AG04450 (cell line): ENCODE measurements at regions of chr16 and their contacts with region 1.

Region 1: DNA sequence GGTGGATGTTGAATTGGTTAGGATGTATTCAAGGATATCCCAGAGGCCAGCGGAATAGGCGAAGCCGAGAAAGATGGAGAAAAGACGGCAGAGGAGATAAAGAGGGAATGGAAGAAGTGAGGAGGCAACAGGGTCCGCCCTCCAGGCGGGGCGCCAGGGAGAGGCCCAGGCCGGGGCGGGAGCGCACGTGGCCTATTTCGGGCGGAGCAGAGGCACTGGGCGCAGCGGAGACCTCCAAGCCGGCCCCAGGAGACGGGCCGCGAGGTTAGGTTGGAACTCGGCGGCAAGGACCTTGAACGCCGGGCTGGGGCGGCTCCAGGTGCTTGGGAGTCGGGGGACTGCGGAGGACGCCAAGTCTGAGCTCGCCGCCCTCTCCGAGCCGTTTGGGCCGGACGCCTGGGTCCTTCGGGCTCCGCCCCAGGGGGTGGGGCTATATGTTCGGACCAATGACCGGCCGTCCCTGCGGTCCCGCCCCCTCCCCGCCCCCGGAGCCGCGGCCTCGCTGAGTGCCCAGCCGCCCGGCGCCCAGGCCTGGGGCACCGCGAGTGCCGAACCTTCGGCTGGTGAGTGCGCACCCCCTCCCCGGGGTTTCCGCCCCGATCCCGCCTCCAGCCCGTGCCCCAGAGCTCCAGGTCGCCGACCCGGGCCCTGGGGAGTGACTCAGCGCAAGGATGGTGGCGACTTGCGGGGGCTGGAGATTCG is at the start of gene ZNF771:
- DNase-seq: peak; percentile 45
- H3K4me3 ChIP-seq: peak within 1 kb of the TSS; percentile 78
- H3K27ac ChIP-seq: peak within 1 kb of the TSS; percentile 87
- H3K27me3 ChIP-seq: no peaks in the 10 kb centered on the region
- CTCF ChIP-seq: no peak
- polyA plus RNA-seq, gene ZNF771: 9.3 and 10.1 TPM in 2 replicates

Region 2: DNA sequence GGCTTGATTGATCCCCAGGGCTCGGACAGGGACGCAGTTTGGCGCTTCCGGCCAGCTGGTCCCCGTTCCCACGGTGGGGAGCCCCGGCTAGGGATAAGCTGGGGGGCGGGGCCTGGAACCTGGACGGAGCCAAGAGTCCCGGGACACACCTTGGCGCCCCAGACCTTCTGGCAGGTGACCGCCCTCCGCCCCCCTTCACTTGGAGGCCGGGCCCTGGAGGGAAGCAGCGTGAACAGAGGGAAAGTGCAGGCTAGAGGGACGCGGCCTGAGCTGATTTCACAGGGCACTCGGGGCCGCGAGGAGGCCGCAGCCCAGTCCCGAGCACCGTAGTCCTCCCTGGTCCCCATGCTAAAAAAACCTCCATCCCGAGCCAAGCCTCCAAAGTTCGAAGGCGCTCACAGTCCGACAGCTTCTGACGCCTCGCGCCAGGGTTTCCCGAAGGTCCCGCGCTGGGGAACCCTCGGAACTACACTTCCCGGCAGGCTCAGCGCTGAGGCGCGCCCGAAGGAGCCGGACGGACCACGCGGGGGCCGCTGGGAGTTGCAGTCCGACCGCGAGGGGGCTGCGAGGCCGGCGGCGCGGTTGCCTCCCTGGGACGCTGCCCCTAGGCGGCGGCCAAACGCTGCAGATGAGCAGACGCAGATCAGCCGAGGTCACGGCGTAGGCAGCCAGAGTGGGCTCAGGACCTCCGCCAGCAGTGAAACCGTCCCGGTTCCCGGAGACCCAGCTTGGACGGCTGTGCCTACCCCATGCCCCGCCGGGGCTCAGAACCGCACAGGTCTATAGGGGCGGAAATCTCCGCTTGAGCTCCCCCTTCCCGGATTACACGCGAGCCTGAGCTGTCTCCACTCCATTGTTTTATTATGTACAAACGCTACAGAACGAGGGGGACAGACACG is 315.5 kb before region 1 on chr16 and contains the start of gene TBX6:
- CTCF ChIA-PET with region 1: interaction called, 19 read pairs
- POLR2A ChIA-PET with region 1: no interaction called
- DNase-seq: peak; percentile 54
- H3K4me3 ChIP-seq: peak within 1 kb of the TSS; percentile 56
- H3K27ac ChIP-seq: peak within 1 kb of the TSS; percentile 47
- H3K27me3 ChIP-seq: no peaks in the 10 kb centered on the region
- CTCF ChIP-seq: peak; percentile 74
- polyA plus RNA-seq, gene TBX6: not detected in 2 replicates

Region 3: DNA sequence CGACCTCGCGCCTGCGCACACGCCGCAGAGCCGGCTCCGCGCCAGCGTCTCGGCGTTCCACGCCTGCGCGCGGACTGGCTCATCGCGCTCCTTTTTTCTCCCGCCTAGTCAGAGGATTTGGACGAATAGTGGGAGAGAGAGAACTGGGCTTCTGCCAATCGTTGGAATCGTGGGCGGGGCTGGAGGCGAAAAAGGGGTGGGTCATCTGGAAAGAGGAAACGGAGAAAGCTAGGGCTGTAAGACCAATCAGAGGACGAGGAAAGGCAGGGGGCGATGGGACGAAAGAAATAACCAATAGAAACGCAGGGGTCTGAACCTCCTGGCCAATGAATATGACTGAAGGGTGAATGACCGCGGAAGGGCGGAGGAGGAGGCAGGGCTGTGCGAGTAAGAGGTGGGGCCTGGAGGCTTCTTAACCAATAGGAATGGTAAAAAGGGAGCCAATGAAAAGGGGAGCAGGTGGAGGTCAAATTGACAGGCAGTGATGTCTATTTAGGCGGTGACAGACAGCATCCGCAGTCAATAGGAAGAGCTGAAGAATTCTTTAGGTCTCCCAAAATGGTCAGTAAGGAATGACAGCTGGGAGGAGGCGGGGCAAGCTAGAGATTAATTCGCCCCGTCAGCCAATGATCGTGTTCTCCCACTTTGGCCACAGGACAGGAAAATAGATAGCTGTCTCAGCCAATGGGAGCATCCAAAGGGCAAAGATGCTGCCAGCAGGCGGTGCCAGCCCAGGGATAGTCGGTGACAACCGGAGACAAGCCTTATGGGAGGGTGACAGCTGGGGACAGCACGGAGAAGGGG is 36.6 kb before region 1 on chr16 and contains the start of gene TBC1D10B:
- CTCF ChIA-PET with region 1: interaction called, 9 read pairs
- POLR2A ChIA-PET with region 1: interaction called, 16 read pairs
- DNase-seq: peak; percentile 100
- H3K4me3 ChIP-seq: peak within 1 kb of the TSS; percentile 85
- H3K27ac ChIP-seq: peak within 1 kb of the TSS; percentile 52
- H3K27me3 ChIP-seq: no peaks in the 10 kb centered on the region
- CTCF ChIP-seq: peak; percentile 36
- polyA plus RNA-seq, gene TBC1D10B: 12.0 and 14.8 TPM in 2 replicates

Region 4: DNA sequence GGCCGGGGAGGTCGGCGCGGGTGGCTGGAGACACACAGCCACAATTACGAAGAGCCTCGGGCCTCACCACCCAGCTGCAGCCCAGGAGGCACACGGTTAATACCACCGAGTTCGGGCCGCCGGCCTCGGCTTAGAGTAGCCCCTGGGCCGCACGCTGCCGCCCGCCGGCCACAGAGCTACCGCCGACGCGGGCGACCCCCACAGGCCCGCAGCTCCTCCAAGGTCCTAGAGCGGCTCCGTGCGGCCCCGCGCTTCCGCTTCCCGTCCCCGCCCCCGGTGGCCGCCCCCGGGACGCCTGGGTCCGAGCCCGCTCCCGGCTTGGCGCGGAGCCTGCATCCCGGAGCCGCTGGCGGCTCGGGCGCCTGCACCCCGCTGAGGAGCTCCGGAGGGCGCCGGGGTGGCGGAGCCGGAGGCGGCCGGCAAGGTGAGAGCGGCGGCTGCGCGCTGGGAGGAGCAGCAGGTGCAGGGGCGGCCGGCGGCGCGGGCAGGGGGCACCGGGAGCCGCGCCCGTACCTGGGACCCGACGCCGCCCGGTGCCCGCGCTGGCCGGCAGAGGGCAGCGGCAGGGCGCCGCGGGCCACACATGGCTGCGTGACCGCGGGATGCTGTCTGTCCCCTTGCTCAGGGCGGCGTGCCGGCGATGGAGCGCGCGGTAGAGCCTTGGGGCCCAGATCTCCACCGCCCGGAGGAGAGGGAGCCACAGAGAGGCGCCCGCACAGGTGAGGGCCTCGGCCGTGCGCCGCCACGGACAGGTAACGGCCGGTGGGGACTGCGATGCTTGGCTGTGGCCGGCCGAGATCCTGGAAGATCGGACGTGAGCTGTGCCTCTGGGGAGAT is 11.9 kb before region 1 on chr16 and contains the start of gene ZNF48:
- CTCF ChIA-PET with region 1: interaction called, 13 read pairs
- POLR2A ChIA-PET with region 1: interaction called, 23 read pairs
- DNase-seq: peak; percentile 63
- H3K4me3 ChIP-seq: peak within 1 kb of the TSS; percentile 79
- H3K27ac ChIP-seq: peak within 1 kb of the TSS; percentile 91
- H3K27me3 ChIP-seq: no peaks in the 10 kb centered on the region
- CTCF ChIP-seq: 0 out of 2 replicates have a peak, but pooled peaks have one; percentile 11
- polyA plus RNA-seq, gene ZNF48: 4.3 and 5.3 TPM in 2 replicates

Region 5: GRCh38 chr16:30417529-30418349 is 10.5 kb after region 1 on chr16:
- CTCF ChIA-PET with region 1: interaction called, 13 read pairs
- POLR2A ChIA-PET with region 1: interaction called, 13 read pairs
- DNase-seq: peak; percentile 80
- H3K4me3 ChIP-seq: peak overlapping the region; percentile 60
- H3K27ac ChIP-seq: no peak overlapping the region
- H3K27me3 ChIP-seq: no peaks in the 10 kb centered on the region
- CTCF ChIP-seq: 0 out of 2 replicates have a peak, but pooled peaks have one; percentile 10

Region 6: DNA sequence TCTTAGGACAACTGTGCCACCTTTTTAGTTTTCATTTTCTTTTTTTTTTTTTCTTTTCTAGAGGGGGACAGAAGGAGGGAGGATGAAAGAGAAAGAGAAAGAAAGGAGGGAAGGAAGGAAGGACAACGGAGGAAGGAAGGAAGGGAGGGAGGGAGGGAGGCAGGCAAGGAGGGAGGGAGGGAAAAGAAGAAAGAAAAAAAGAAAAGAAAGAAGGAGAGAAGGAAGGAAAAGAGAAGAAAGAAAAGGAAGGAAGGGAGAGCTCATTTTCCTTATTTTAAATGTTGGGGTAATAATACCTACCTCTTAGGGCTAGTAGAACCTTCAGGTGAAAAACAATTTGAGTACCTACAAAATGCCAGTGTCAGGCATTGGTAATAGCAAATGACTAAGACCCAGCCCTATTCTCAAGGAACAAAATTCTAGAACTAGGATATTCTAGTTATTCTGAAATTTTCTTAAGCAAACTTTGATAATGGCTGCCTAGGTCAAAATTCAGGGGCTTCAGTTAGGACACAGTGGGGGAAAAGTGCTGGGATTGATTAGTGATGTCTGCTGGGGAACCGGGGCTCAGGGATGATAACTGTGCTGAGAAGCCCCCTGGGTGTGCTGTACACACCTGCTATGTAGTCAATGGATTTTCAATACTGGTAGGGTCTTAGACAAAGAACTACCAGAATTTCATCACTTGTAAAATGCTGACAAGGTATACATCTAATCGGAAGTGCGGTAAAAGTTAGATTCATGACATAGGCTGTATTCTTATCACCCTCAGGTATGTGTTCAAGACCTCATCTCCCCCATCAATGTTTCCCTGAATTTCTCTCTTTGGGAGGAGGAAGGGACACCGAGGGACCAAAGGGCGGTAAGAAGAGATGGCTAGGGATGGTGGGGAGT is 96.4 kb after region 1 on chr16:
- CTCF ChIA-PET with region 1: no interaction called
- POLR2A ChIA-PET with region 1: no interaction called
- DNase-seq: no peak
- H3K4me3 ChIP-seq: no peak overlapping the region
- H3K27ac ChIP-seq: no peak overlapping the region
- H3K27me3 ChIP-seq: peaks cover 16% of the 10 kb centered on the region
- CTCF ChIP-seq: no peak

Region 7: DNA sequence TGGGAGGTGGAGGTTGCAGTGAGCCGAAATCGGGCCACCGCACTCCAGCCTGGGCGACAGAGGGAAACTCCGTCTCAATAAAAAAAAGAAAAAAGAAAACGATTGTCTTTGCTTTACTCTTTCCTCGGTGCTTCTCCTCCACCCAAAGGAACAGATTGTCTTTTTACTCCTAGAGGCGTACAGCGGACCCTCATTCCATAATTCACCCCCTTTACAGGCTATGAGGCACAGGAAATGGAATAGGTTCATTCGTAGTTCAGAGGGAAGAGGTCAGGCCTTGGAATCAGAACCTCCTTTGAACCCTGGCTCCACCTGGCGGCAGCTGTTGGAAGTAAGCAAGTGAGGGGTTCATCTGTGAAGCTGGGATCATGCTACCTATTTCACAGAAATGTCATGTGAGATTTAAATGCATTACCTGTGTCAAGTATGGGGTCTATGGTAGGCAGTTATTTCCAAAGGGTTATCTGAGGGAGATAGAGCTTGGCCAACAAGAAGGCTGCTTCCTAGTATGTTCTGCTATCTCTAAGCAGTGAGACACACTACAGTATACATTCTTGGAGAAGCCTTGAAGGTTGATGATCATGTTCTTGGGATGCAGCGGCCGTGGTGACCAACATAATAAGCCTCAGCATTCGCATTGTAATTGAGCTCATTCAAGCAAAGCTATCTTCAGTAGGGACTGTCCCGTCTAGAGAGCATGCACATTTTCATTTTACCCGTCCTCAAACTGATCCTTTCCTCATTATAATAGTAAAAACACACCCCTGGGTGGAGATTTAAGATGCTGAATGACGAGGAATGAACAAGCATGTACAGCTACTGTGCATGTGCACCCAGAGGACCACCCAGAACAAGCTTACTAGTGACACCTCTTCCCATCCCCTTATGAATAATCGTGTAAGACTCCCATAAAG is 221.6 kb after region 1 on chr16:
- CTCF ChIA-PET with region 1: interaction called, 12 read pairs
- POLR2A ChIA-PET with region 1: no interaction called
- DNase-seq: peak; percentile 43
- H3K4me3 ChIP-seq: no peak overlapping the region
- H3K27ac ChIP-seq: no peak overlapping the region
- H3K27me3 ChIP-seq: peaks cover 5% of the 10 kb centered on the region
- CTCF ChIP-seq: peak; percentile 94